ENCODE measurements at regions of chr20 and their contacts with region 1.

Region 1: DNA sequence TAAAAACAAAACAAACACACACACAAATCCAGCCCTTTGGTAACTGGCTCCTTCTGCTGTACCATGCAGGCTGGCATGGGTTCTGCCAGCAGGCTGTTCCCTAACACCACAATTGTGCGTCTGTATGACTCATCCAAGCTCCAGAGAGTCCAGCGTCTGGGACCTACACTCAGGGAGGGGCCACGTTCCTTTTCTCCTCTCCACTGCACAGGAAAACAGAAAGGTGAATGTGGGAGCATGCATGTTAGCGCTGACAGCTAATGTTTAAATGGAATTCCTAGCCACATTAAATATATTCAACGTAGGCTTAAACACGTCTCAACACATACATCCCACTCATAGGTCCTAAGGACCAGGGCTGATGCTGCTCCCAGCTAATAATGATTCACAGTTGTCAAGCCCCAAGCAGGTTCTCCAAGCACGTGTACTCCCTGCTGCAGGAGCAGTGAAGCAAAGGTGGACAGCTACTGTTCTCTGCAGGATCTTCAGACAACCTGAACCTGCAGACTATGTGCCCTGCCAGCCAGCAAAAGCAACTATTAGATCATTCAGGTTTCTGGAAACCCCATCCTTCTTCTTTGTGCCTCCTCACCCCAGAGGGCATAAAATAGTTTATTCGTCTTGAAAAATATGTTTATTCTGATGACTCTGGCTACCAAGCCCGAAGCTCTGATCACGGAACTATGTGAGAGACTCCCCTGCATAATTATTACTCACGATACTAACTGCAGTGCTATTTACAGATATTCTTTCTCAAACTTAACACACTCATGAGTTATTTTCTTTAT is 20.9 kb downstream of the MAP1LC3A start:
- DNase-seq: peak; percentile 47 to 82
- ATAC-seq: peak; percentile 91 to 96 (median 92)
- H3K4me3 ChIP-seq: no peak overlapping the region
- H3K27ac ChIP-seq: peak overlapping the region; percentile 66
- H3K4me1 ChIP-seq: peaks cover 28% of the 10 kb centered on the region
- H3K27me3 ChIP-seq: no peaks in the 10 kb centered on the region
- CTCF ChIP-seq: peak; percentile 55

Region 2: DNA sequence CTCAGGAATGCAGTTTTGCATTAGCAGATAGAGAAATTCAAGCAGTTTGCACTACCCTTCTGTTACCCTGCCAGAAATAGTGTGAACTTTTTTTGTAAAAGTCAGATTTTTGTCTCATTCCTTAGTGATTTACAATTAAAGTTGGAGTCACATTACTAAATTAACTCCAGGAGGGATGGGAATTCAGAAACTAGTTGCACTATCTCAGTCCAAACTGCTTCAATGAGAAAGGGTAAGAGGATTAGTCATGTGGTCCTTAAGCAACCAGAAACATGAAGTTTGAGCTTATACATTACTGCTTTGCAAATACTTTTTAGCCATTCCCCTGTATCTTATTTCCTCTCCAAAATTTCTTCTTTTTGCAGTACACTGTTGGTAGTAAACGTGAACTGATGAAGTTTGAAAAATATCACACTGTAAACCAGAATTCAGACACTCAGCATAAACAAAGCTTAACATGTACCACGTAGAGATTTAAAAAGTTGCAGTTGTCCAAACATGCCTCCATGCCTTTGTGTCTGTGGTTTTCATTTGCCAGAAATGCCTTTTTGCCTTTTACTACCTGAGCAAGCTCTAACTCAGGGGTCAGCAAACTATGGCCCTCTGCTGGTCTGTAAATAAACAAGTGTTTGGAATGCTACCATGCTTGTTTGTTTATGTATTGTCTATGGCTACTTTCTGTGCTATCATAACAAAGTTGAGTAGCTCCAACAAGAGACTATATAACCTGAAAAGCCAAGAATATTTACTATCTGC is 174.5 kb after region 1 on chr20:
- intact Hi-C with region 1: loop called in 1 of 2 experiments (anchors 10 kb)
- DNase-seq: no peak
- ATAC-seq: peak in 1 of 4 donors; percentile 44
- H3K4me3 ChIP-seq: no peak overlapping the region
- H3K27ac ChIP-seq: no peak overlapping the region
- H3K4me1 ChIP-seq: no peaks in the 10 kb centered on the region
- H3K27me3 ChIP-seq: no peaks in the 10 kb centered on the region
- CTCF ChIP-seq: no peak

Region 3: DNA sequence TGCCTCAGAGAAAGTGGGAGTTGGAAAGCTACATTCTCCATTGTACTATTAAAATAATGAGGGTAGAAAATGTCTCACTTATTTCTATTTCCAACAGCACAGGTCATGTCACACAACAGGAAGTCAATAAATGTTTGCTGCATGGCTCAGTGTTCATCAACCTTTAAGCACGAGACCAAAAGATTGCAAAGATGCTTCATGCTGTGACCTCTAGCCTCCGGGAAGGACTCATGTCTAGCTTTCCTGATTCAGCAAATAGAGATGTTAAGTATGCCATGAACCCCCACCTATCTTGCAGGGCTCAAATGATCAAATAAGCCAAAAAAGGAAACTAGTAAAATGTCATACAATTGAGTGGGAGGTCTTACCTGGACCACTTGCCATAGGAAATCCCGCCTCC is 188.7 kb after region 1 on chr20:
- intact Hi-C with region 1: loop called (anchors 2 to 5 kb)
- DNase-seq: no peak
- ATAC-seq: no peak
- H3K4me3 ChIP-seq: no peak overlapping the region
- H3K27ac ChIP-seq: no peak overlapping the region
- H3K4me1 ChIP-seq: peaks cover 8% of the 10 kb centered on the region
- H3K27me3 ChIP-seq: no peaks in the 10 kb centered on the region
- CTCF ChIP-seq: no peak

Measured in psoas muscle (tissue), 8 donors.